Mammary epithelial cell (primary cell): ENCODE measurements at regions of chr7 and their contacts with region 1.

Region 1: DNA sequence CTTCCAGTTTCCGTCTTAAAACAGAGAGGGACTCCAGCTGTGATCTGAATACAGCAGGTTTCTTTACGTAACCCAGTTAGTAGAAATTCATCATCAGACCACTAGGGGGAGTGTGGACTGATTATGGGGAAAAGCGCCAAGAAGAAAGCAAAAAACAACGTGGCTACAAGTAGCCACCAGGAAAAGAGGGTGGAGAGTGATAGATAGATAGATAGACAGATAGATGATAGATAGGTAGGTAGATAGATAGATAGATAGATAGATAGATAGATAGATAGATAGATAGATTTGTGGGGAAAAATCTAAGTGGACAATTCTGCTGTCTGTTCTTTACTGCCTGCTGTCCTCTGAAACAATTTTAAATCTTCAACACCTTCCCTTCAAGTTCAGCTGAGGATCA is 12.7 kb upstream of the AKR1B10 start:
- DNase-seq: peak; percentile 75
- H3K4me3 ChIP-seq: no peak overlapping the region
- H3K27ac ChIP-seq: no peak overlapping the region
- H3K4me1 ChIP-seq: peaks cover 52% of the 10 kb centered on the region
- H3K27me3 ChIP-seq: no peaks in the 10 kb centered on the region
- CTCF ChIP-seq: peak; percentile 73 to 78

Region 2: GRCh38 chr7:134368851-134369552 is 145.7 kb before region 1 on chr7:
- CTCF ChIA-PET with region 1: no interaction called
- dilution Hi-C with region 1: no loop called
- in situ Hi-C with region 1: no loop called
- intact Hi-C with region 1: loop called (anchors 5 kb)
- DNase-seq: peak; percentile 74
- H3K4me3 ChIP-seq: no peak overlapping the region
- H3K27ac ChIP-seq: no peak overlapping the region
- H3K4me1 ChIP-seq: peaks cover 49% of the 10 kb centered on the region
- H3K27me3 ChIP-seq: no peaks in the 10 kb centered on the region
- CTCF ChIP-seq: no peak

Region 3: DNA sequence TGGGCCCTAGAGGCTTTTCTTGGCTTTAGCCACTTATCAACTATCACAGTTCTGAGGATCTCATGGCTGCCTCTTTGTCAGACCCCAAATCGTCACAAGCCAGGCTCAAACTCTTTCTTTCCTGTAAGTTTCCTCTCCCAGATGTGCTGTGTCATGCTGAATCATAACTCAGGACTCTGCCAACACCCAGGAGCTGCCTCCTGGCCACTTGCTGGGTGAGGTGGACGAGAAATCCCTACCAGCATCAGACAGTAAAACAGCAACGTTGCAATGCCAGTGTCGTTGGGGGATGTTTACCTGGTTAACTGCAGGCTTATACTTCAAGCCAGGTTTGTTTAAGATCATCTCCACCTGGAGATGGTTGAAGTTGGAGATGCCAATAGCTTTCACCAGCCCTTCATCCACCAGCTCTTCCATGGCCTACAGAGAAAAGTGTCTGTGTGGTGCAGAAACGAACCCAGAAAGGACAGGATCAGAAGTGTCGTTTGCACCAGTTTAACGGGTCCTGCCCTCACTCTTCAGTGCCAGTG is 65.9 kb before region 1 on chr7:
- CTCF ChIA-PET with region 1: no interaction called
- dilution Hi-C with region 1: no loop called
- in situ Hi-C with region 1: no loop called
- intact Hi-C with region 1: loop called (anchors 2 kb)
- DNase-seq: peak; percentile 90
- H3K4me3 ChIP-seq: no peak overlapping the region
- H3K27ac ChIP-seq: peak overlapping the region; percentile 89
- H3K4me1 ChIP-seq: peaks cover 40% of the 10 kb centered on the region
- H3K27me3 ChIP-seq: no peaks in the 10 kb centered on the region
- CTCF ChIP-seq: no peak

Region 4: DNA sequence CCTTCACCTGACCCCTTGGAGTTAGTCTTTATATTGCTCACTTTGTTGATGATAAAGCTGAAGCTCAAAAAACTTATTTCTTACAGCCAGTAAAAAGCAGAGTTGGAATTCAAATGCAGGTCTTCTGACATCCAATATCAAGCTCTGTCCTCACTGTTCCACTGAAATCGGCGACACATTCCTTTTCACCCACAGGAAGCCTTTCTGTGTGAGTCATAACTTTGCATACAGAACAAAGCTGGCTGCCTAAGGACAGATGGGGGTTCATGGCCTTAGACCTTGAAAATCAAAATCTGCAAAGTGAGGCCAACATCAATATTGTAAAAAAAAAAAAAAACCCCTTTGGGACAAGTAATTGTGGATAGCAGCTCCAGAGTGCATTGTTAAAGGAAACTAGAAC is 33.9 kb before region 1 on chr7:
- CTCF ChIA-PET with region 1: interaction called, 6 read pairs
- dilution Hi-C with region 1: no loop called
- in situ Hi-C with region 1: no loop called
- intact Hi-C with region 1: loop called (anchors 1 kb)
- DNase-seq: peak; percentile 36
- H3K4me3 ChIP-seq: no peak overlapping the region
- H3K27ac ChIP-seq: no peak overlapping the region
- H3K4me1 ChIP-seq: peaks cover 15% of the 10 kb centered on the region
- H3K27me3 ChIP-seq: no peaks in the 10 kb centered on the region
- CTCF ChIP-seq: no peak

Region 5: GRCh38 chr7:134605973-134606923 is 91.6 kb after region 1 on chr7:
- CTCF ChIA-PET with region 1: no interaction called
- dilution Hi-C with region 1: no loop called
- in situ Hi-C with region 1: loop called in 1 of 2 experiments (anchors 5 kb)
- intact Hi-C with region 1: loop called (anchors 1 kb)
- DNase-seq: no peak
- H3K4me3 ChIP-seq: peak overlapping the region in 1 of 3 experiments; percentile 26
- H3K27ac ChIP-seq: no peak overlapping the region
- H3K4me1 ChIP-seq: peaks cover 7% of the 10 kb centered on the region
- H3K27me3 ChIP-seq: no peaks in the 10 kb centered on the region
- CTCF ChIP-seq: peak; percentile 85 to 93